Breast epithelium (tissue), 4 donors: ENCODE measurements at regions of chr1 and their contacts with region 1.

Region 1: DNA sequence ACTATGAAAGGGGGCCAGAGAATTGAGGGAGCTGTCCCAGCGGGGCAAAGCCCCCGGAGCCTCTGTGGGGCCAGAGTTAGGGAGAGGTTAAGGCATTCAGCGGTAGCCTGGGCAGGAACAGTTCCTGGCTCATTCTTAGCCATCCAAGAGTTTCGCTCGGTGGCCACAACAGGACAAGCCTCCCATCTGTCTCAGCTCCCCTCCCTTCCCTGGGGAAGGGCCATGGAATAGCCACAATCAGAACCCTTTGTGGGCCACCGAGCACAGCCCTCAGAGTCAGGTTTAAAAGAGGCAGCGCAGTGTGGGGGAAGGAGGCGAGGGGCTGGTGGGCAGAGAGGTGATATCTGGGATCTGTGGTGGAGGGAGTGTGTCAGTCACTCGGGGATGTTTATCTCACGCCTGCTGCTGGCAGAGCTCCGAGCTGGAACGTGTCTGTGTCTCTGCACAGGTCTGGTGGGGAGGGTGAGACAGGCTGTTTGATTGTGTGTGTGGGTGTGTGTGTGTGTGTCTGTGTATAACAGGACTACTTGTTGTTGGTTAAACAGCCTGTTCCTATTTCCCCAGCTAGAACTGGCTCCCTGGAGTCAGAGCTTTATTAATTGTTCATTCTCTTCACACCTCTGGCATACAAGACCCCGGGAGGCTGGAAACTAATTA is 49.6 kb upstream of the GOLT1A start:
- DNase-seq: no peak
- H3K4me3 ChIP-seq: no peak overlapping the region
- H3K27ac ChIP-seq: peak overlapping the region; percentile 0 to 25
- H3K4me1 ChIP-seq: no peaks in the 10 kb centered on the region
- H3K27me3 ChIP-seq: no peaks in the 10 kb centered on the region
- CTCF ChIP-seq: no peak
- POLR2A ChIP-seq: no peak

Region 2: GRCh38 chr1:204316164-204316563 is 52.8 kb after region 1 on chr1:
- intact Hi-C with region 1: loop called (anchors 1 kb)
- DNase-seq: no peak
- H3K4me3 ChIP-seq: no peak overlapping the region
- H3K27ac ChIP-seq: no peak overlapping the region
- H3K4me1 ChIP-seq: no peaks in the 10 kb centered on the region
- H3K27me3 ChIP-seq: no peaks in the 10 kb centered on the region
- CTCF ChIP-seq: no peak
- POLR2A ChIP-seq: no peak